ENCODE measurements at regions of chr4 and their contacts with region 1.

Region 1: DNA sequence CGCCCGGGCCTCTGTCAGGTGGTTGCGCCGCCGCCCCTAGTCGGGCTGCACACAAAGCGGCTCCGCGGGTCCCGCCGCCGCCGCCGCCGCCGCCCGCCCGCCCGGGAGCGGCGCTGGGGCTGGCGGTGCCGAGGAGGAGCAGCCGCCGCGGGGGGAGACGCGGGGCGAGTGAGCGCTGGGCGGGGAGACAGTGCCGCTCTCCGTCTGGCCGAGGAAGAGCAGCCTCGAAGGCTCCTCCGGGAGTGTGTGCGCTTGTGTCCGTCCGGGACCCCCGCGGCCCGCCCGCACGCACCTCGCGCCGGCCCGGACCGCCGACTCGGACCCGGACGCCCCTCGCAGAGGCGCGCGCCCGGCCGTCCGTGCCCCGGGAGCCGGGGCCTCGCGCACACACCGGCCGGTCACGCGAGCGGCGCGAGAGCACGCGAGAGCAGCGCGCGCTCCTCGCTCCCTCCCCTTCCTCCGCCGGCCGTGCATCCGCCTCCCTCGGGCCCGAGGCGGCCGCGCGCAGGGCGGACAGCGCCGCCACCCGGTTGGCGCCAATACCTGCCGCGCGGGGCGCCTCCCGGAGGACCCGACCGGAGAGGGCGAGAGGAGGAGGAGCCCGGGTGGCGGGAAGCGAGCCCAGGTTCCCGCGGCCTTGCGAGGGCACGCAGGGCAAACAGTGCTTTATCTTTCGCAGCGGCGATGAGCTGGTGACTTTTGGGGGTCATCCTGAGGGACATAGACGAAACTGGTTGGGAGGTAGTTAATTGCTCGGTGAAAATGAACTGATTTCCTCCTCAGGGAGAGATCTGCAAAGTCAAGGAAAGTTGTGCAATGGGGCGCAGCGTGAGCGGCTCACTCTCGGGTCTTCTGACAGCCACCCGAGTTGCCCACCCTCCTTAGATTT is at the start of gene PDS5A:
- DNase-seq: peak; percentile 89
- H3K4me3 Mint-ChIP-seq: peak within 1 kb of the TSS; percentile 93
- H3K27ac Mint-ChIP-seq: peak within 1 kb of the TSS; percentile 93
- H3K4me1 Mint-ChIP-seq: peaks cover 23% of the 10 kb centered on the region
- H3K27me3 Mint-ChIP-seq: no peaks in the 10 kb centered on the region
- total RNA-seq, gene PDS5A: 117 and 120 TPM in 2 replicates

Region 2: GRCh38 chr4:39469429-39470077 is 508.2 kb before region 1 on chr4:
- intact Hi-C with region 1: loop called (anchors 1 kb)
- DNase-seq: no peak
- H3K4me3 Mint-ChIP-seq: no peak overlapping the region
- H3K27ac Mint-ChIP-seq: peak overlapping the region; percentile 60
- H3K4me1 Mint-ChIP-seq: peaks cover 13% of the 10 kb centered on the region
- H3K27me3 Mint-ChIP-seq: no peaks in the 10 kb centered on the region

Region 3: DNA sequence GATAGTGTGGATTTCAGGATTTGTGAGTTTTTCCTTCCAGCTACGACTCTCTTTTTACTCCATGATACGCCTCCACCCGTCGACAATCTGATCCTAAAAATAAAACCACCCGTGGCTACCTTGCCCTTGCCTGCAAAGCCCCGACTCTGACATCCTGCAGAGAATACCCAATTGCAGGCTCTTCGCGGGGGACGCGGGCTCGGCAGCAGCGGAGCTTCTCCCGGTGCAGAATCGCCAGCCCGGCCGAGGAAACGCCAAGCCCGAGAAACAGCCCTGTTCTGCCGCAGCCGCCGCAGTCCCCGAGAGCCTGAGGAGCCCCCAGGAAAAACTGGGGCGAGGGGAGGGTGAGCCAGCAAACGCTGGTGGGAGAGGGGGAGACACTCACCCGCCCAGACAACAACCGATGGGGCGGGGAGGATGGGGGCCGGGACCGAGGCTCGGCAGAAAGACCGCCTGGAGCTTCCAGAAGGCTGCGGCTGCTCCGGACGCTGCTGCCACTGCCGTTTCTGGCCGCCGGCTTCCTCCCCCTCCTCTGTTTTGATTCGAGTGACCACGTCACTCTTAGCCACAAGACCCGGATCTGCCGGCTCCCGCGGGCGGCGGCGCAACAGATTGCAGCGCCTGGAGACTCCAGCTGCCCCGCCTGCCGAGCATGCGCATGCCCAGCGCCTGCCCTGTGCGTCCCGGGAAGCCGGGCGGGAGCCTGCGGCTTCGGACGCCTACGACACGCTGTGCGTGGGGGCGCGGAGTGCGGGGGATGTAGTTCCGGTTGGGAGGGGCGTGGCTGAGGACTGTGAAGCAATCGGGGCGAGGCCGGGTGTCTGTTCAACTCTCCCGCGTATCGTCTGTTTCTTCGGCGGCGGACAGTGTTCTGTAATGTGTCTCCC is 339.1 kb before region 1 on chr4 and contains the start of gene SMIM14:
- intact Hi-C with region 1: loop called (anchors 2 kb)
- DNase-seq: peak; percentile 86
- H3K4me3 Mint-ChIP-seq: peak within 1 kb of the TSS; percentile 86
- H3K27ac Mint-ChIP-seq: peak within 1 kb of the TSS; percentile 67
- H3K4me1 Mint-ChIP-seq: peaks cover 27% of the 10 kb centered on the region
- H3K27me3 Mint-ChIP-seq: peaks cover 28% of the 10 kb centered on the region
- total RNA-seq, gene SMIM14: 1.7 and 1.9 TPM in 2 replicates

Region 4: DNA sequence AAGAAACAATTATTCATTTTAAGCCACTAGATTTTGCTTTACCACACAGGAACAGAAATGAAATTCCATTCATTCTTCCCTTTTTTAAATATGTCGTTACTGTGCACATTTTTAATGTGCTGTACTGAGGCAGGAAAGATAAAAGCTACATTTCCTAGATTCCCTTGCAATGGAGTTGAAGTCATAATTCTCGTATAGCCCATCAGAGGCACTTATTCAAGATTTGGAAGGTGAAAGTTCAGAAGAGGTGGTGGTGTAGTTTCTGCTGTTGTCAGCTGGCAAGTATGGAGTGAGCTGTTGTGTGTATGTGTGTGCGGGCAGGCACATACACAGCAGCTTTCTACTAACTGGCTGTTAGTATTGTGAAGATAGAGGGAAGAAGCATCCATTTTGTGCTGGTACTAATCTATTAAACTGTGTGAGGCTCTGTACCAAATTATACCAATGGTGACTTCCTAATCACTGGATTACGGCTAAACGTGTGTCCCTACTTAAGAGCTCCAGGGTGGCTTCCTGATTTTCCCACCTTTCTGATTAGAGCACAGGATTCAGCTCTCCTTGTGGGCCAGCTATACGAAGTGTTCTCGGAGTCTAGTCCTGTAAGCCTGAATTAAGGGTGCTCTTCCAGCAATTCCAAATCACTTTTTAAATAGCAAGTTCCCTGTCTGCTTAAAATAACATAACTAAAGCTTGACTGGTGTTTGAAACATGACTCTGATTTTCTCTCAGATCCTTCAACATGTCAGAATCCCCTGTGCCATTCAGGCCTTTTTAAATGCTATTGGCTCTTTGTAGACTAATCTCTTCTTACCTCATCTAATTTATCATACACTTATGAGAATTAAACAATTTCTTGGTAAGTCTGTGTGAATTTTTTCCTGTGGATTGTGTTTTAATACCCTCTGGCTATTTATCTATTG is 43.8 kb before region 1 on chr4:
- intact Hi-C with region 1: loop called (anchors 5 kb)
- DNase-seq: no peak
- H3K4me3 Mint-ChIP-seq: no peak overlapping the region
- H3K27ac Mint-ChIP-seq: peak overlapping the region; percentile 52
- H3K4me1 Mint-ChIP-seq: peaks cover 41% of the 10 kb centered on the region
- H3K27me3 Mint-ChIP-seq: no peaks in the 10 kb centered on the region

Region 5: DNA sequence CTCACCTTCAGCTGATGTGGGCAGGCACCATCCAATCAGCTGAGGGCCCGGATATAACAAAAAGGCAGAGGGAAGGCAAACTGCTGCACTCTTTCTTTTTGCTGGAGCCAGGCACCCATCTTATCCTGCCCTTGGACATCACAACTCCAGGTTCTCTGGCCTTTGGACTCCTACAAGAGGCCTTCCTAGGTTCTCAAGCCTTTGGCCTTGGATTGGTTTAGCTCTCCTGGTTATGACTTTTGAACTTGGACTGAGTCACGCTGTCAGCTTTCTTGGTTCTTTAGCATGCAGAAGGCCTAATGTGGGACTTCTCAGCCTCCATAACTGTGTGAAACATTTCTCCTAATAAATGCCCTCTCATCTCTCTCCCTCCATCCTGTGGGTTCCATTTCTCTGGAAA is 55.9 kb after region 1 on chr4:
- intact Hi-C with region 1: no loop called
- DNase-seq: no peak
- H3K4me3 Mint-ChIP-seq: no peak overlapping the region
- H3K27ac Mint-ChIP-seq: peak overlapping the region; percentile 0
- H3K4me1 Mint-ChIP-seq: peaks cover 4% of the 10 kb centered on the region
- H3K27me3 Mint-ChIP-seq: no peaks in the 10 kb centered on the region

Region 6: GRCh38 chr4:40309250-40309774 is 331.6 kb after region 1 on chr4:
- intact Hi-C with region 1: loop called (anchors 5 kb)
- DNase-seq: peak; percentile 82
- H3K4me3 Mint-ChIP-seq: peak overlapping the region; percentile 45
- H3K27ac Mint-ChIP-seq: peak overlapping the region; percentile 95
- H3K4me1 Mint-ChIP-seq: peaks cover 80% of the 10 kb centered on the region
- H3K27me3 Mint-ChIP-seq: no peaks in the 10 kb centered on the region

Measured in activated T-helper 2 cell treated with anti-CD3 and anti-CD28 coated beads, Interferon-gamma antibody, Interleukin-2, Interleukin-4, amounts not matched to agents 10 μg/mL and 5 μg/mL and 100 μg/mL, durations not matched to agents 14 hours and 24 hours and 36 hours (primary cell).